ENCODE measurements at regions of chr6 and their contacts with region 1.

Region 1: GRCh38 chr6:75526502-75527127 is 33.0 kb upstream of the FILIP1 start:
- DNase-seq: peak in 4 of 5 donors; percentile 19 to 62 (median 42)
- H3K4me3 ChIP-seq: no peak overlapping the region
- H3K27ac ChIP-seq: no peak overlapping the region
- H3K4me1 ChIP-seq: no peaks in the 10 kb centered on the region
- H3K27me3 ChIP-seq: no peaks in the 10 kb centered on the region
- CTCF ChIP-seq: peak; percentile 56 to 76 (median 58)
- EP300 ChIP-seq: no peak
- POLR2A ChIP-seq: no peak

Region 2: DNA sequence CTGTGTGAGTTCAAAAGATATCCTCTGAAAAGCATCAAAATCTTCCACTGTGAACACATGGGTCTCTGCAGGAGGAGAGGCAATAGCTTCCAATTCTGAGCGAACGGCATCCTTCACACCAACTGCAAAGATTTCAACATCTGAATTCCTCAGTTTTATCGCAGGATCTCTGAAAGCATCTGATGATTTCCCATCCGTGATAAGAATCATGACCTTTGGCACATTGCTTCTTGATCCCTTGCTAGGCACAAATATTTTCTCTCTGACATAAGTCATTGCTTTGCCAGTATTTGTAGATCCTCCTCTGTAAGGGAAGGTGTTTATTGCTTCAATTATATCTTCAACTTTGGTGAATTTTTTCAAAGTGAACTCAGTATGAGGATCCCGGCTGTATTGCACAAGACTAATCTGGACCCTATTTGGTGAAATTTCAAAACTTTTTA is 343.5 kb before region 1 on chr6:
- intact Hi-C with region 1: no loop called
- DNase-seq: no peak
- H3K4me3 ChIP-seq: no peak overlapping the region
- H3K27ac ChIP-seq: no peak overlapping the region
- H3K4me1 ChIP-seq: no peaks in the 10 kb centered on the region
- H3K27me3 ChIP-seq: no peaks in the 10 kb centered on the region
- CTCF ChIP-seq: no peak
- EP300 ChIP-seq: no peak
- POLR2A ChIP-seq: no peak

Region 3: GRCh38 chr6:75266716-75267291 is 259.8 kb before region 1 on chr6:
- intact Hi-C with region 1: loop called (anchors 5 to 10 kb)
- DNase-seq: no peak
- H3K4me3 ChIP-seq: no peak overlapping the region
- H3K27ac ChIP-seq: no peak overlapping the region
- H3K4me1 ChIP-seq: peaks cover 1% of the 10 kb centered on the region
- H3K27me3 ChIP-seq: no peaks in the 10 kb centered on the region
- CTCF ChIP-seq: peak; percentile 18 to 71 (median 59)
- EP300 ChIP-seq: no peak
- POLR2A ChIP-seq: no peak

Region 4: GRCh38 chr6:75748743-75749501 is 222.3 kb after region 1 on chr6 and contains the start of gene MYO6:
- intact Hi-C with region 1: no loop called
- DNase-seq: peak; percentile 61 to 78 (median 71)
- H3K4me3 ChIP-seq: peak within 1 kb of the TSS; percentile 81
- H3K27ac ChIP-seq: peak within 1 kb of the TSS; percentile 62 to 70
- H3K4me1 ChIP-seq: peaks cover 2% of the 10 kb centered on the region
- H3K27me3 ChIP-seq: no peaks in the 10 kb centered on the region
- CTCF ChIP-seq: no peak
- EP300 ChIP-seq: no peak
- POLR2A ChIP-seq: peak; percentile 43
- total RNA-seq, gene MYO6: 7.5 to 20.8 (median 13.1) TPM

Measured in ovary (tissue), 10 donors.